ENCODE measurements at regions of chr12 and their contacts with region 1.

Region 1: DNA sequence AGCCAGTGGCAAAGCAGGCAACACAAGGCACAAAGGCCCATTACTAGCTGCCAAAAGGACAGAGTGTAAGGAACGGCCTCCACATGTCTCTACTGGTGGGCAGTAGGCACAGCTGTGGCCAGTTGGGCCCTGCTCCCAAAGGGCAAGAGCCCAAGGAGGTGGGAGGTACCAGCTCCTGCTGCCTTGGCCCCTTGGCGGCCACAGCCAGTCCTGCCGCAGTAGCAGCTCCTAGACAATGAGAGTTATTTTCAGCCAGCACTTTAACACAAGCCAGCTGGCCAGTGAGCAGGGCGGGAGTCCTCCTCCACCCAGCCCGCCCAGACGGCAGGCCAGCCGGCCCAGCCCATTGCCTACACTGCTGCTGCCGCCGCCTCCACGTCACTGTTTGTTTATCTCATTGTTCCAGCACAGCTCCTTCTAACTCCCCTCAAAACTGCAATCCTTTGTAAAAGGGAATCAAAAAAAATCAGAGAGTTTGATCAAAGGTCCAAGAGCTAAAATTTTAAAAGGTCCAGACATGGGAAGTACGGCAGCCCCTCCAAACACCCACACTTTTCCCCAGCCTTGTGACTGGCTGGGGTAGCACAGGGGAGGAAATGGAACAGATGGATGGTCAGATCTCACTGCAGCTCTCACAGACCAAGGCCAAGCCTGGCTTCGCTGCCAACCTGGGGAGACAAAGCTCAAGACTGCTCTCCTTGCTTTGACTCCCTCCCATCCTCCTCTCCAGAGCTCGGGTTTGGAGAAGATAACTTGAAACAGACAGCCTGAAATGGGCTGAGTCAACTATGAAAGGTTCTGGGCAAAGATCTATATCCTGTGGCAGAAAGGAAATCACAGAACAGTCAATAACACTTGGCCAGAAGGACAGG is 33.5 kb downstream of the FMNL3 start:
- DNase-seq: peak; percentile 16
- H3K4me3 Mint-ChIP-seq: peak overlapping the region; percentile 2
- H3K27ac Mint-ChIP-seq: peak overlapping the region; percentile 94
- H3K4me1 Mint-ChIP-seq: peaks cover 75% of the 10 kb centered on the region
- H3K27me3 Mint-ChIP-seq: no peaks in the 10 kb centered on the region

Region 2: GRCh38 chr12:49698619-49699545 is 25.2 kb after region 1 on chr12:
- CTCF ChIA-PET with region 1: interaction called, 9 read pairs
- POLR2A ChIA-PET with region 1: interaction called, 7 read pairs
- intact Hi-C with region 1: loop called (anchors 1 kb)
- DNase-seq: peak; percentile 69
- H3K4me3 Mint-ChIP-seq: peak overlapping the region; percentile 58
- H3K27ac Mint-ChIP-seq: peak overlapping the region; percentile 77
- H3K4me1 Mint-ChIP-seq: peaks cover 41% of the 10 kb centered on the region
- H3K27me3 Mint-ChIP-seq: no peaks in the 10 kb centered on the region

Region 3: GRCh38 chr12:49707128-49707811 is 33.6 kb after region 1 on chr12 and contains the start of gene FMNL3:
- CTCF ChIA-PET with region 1: interaction called, 12 read pairs
- POLR2A ChIA-PET with region 1: interaction called, 7 read pairs
- intact Hi-C with region 1: loop called (anchors 2 kb)
- DNase-seq: peak; percentile 98
- H3K4me3 Mint-ChIP-seq: peak within 1 kb of the TSS; percentile 85
- H3K27ac Mint-ChIP-seq: peak within 1 kb of the TSS; percentile 72
- H3K4me1 Mint-ChIP-seq: peaks cover 43% of the 10 kb centered on the region
- H3K27me3 Mint-ChIP-seq: peaks cover 3% of the 10 kb centered on the region
- total RNA-seq, gene FMNL3: 31.2 to 31.9 TPM

Region 4: DNA sequence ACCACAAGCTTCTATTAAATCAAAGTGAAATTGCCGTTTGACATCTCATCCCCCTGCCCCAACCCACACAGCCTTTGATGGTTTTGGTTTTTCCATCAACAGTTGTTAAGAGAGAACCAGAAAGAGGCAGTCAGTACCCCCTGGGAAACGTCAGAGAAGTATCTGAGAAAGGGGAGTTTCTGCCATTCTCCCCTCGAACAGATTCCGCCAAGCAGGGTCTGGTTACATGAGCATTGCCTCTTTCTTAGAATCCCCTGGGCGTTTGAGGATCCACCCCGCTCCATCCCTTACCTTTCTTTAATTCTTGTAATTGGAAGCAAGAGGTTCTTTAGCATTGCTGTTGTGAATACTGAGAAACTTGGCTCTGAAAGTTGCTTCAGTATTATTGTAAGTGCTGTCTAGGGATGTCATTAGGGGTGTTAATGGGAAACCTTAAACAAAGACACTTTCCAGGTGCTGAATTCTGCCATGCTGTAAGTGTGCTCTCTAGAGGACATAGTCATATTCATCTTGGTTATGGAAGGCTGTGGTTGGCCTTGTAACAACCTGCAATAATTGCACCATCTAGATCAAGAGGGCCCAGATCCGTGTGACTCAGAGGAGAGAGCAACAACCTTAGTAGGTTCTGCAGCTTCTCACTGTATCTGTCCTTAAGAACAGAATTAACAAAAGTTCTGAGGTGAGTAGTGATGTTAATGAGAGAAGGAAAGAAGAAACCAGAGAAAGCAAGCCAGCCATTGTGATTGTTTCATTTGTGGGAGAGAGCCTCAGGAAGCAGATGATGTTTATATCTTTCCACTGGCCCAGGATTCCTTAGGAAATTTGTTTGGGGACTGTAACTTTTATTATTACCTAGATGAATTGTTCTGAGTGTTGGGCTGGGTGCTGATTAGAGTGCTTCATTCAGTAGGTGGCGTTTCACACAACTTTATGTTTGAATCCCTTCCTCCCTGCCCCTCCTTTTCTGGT is 76.6 kb after region 1 on chr12:
- CTCF ChIA-PET with region 1: no interaction called
- POLR2A ChIA-PET with region 1: no interaction called
- intact Hi-C with region 1: no loop called
- DNase-seq: peak; percentile 77
- H3K4me3 Mint-ChIP-seq: peak overlapping the region; percentile 54
- H3K27ac Mint-ChIP-seq: peak overlapping the region; percentile 92
- H3K4me1 Mint-ChIP-seq: peaks cover 86% of the 10 kb centered on the region
- H3K27me3 Mint-ChIP-seq: no peaks in the 10 kb centered on the region